GM10248 (cell line): ENCODE measurements at regions of chr3 and their contacts with region 1.

Region 1: GRCh38 chr3:150763122-150763841 is at the start of gene SIAH2:
- DNase-seq: peak; percentile 91
- CTCF ChIP-seq: no peak

Region 2: DNA sequence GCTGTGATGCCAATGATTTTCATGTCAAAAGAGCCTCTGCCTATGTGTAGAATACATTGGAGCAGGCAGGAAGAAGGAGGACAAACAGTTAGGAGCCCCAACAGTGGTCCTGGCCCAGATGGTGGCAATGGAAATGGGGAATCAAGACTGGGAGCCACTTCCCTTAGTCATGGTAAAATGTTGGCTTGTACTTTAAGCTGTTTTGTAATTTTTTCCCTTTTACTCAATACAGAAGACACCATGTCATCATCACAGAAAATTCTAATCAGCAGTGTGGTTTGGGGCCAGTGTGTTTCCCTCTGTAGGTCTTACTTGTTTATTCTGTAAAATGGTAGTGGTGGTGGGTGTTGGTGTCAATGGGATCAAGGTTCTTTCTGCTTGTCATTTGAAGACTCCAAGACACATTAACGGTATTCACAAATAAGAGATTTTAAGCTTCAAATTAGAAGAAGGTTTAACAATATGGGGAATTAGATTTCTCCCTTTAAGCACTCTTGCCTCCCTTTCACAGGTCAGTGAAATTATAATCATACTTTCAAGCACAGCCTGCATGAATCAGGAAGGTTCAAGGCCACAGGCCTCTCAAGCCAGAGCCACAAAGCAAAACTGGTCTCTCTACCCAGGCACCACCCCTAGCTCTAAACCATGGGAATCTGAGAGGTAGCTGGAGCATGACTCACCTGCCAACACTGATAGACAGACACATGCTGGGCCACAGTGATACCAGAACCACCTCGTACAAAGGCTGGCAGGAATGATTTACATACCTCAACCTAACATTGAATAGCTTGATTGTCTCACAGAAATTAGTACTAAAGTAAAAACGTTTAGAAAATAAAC is 25.2 kb before region 1 on chr3:
- CTCF ChIA-PET with region 1: interaction called, 19 read pairs
- POLR2A ChIA-PET with region 1: interaction called, 3 read pairs
- DNase-seq: no peak
- CTCF ChIP-seq: no peak

Region 3: DNA sequence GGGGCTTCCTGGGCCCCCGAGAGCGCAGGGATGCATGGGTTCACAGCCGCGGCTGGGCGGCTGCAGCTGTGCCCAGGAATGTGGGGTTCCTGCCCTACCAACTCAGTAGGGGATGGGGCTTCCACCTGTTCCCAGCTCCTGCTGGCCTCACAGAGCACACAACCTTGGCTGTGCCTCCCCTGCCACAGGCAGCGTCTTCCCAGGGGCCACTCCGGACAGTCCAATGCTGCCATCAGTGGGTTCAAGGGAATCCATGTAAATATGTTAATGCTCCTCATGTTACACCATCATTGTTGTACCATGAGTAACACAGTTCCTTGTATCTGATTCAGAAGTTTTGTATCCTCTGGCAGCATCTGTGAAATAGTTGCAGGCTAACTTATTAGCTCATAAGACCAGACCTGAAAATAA is 11.8 kb after region 1 on chr3:
- CTCF ChIA-PET with region 1: interaction called, 12 read pairs
- POLR2A ChIA-PET with region 1: interaction called, 6 read pairs
- DNase-seq: no peak
- CTCF ChIP-seq: no peak

Region 4: GRCh38 chr3:150787741-150788370 is 24.6 kb after region 1 on chr3:
- CTCF ChIA-PET with region 1: interaction called, 89 read pairs
- POLR2A ChIA-PET with region 1: interaction called, 8 read pairs
- DNase-seq: peak; percentile 60
- CTCF ChIP-seq: peak; percentile 97